Common myeloid progenitor, CD34-positive (primary cell): ENCODE measurements at regions of chr3 and their contacts with region 1.

Region 1: GRCh38 chr3:30693470-30694120 is 87.2 kb downstream of the TGFBR2 start:
- DNase-seq: peak; percentile 73 to 83 (median 80)
- H3K4me3 ChIP-seq: no peak overlapping the region
- H3K27ac ChIP-seq: no peak overlapping the region
- H3K4me1 ChIP-seq: peaks cover 0 to 18% (median 15%) of the 10 kb centered on the region in 4 experiments
- H3K27me3 ChIP-seq: no peaks in the 10 kb centered on the region

Region 2: DNA sequence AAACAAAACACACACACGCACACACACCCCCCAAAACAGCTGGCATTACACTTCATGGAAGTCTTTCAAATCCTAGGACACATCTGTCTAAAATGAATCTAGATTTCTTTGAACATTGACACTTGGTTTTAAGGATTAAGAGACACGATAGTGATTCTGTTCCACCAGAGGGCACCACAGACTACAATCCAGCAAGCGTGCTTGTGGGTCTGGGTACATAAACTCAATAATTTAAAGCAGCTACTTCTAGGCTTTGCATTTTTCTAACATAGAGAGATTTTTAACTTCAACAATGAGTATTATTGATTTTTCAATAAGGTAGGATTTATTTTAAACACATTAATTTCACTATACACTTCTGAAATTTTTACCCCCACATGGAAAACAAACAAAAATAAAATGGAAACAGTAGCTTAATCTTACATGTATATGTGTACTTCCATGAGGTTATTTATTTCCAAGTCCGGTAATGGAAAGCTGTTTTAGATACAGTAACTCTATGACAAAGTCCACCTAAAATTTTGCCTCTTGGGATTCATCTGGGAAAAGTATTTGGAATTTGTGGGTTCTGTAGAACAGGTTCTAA is 651.2 kb before region 1 on chr3:
- CTCF ChIA-PET with region 1: interaction called, 49 read pairs
- POLR2A ChIA-PET with region 1: no interaction called
- DNase-seq: peak; percentile 74 to 88 (median 82)
- H3K4me3 ChIP-seq: no peak overlapping the region
- H3K27ac ChIP-seq: no peak overlapping the region
- H3K4me1 ChIP-seq: peaks cover 0 to 8% (median 4%) of the 10 kb centered on the region in 4 experiments
- H3K27me3 ChIP-seq: no peaks in the 10 kb centered on the region

Region 3: GRCh38 chr3:30199096-30199759 is 494.4 kb before region 1 on chr3:
- CTCF ChIA-PET with region 1: interaction called, 13 read pairs
- POLR2A ChIA-PET with region 1: no interaction called
- DNase-seq: peak; percentile 46 to 79 (median 65)
- H3K4me3 ChIP-seq: no peak overlapping the region
- H3K27ac ChIP-seq: no peak overlapping the region
- H3K4me1 ChIP-seq: peaks cover 0 to 13% (median 11%) of the 10 kb centered on the region in 4 experiments
- H3K27me3 ChIP-seq: no peaks in the 10 kb centered on the region

Region 4: DNA sequence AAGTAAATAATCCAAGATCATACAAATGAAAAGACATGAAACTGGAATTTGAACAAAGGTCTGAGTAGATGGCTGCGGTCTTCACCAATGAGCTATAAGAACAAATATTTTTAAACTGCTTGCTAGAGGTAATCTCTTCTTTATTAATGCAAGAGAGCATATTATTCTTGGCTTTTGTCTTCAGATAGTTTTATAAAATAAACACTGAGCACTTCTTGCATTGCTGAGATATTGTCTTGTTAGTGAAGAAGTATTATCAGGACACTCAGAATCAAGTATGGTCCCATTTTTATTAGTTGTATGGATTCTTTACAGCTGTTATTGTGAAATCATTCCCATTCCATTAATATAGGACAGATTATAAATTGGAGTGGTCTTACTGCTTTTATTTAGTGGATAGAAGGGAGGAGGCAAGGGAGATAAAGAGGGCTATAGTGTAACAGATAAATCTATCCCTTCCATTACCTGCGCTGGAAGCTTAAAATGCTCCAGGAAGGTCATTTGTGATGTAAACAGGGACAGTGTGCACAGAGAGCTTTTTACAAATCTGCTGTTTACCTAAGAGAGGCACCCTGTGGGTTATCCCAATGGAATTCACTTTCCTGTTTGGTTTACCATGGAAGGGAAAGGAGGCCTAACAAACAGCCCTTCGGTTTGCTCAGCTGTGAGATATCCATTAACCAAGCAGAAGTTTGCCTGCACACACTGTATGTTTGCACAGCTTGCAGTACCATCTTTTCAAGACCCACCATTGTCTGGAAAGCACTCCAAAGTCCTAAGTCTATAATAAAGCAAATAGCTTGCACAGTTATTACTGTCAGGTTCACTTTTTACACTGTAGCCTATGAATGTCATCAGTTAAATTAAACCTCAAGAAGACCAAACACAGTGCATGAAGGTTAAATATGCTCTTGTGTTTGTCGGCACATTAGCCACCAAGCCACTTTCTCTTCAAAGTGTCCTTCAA is 434.9 kb before region 1 on chr3:
- CTCF ChIA-PET with region 1: no interaction called
- POLR2A ChIA-PET with region 1: no interaction called
- DNase-seq: no peak
- H3K4me3 ChIP-seq: no peak overlapping the region
- H3K27ac ChIP-seq: no peak overlapping the region
- H3K4me1 ChIP-seq: no peaks in the 10 kb centered on the region
- H3K27me3 ChIP-seq: no peaks in the 10 kb centered on the region

Region 5: DNA sequence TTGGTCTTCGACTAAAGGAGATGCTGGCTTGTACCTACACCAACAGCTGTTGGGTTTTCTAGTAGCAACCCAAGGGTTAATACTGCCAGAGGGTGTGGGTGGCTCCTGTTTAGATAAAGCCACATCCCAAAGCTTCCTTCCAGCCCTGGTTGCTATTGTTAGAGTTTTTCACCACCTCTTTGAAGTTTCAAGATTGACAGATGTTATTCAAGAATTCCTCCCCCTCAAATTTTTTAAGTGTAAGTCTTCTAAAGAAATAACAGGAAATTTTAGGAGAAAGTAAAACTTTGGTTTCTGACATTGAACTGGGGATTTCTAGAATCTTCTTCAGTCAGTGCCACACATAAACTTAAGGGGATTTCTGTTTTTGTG is 26.3 kb before region 1 on chr3:
- CTCF ChIA-PET with region 1: interaction called, 10 read pairs
- POLR2A ChIA-PET with region 1: no interaction called
- DNase-seq: peak in 1 of 3 donors; percentile 46
- H3K4me3 ChIP-seq: no peak overlapping the region
- H3K27ac ChIP-seq: no peak overlapping the region
- H3K4me1 ChIP-seq: peaks cover 22 to 50% (median 33%) of the 10 kb centered on the region in 4 experiments
- H3K27me3 ChIP-seq: no peaks in the 10 kb centered on the region